Activated T-helper 2 cell treated with anti-CD3 and anti-CD28 coated beads, Interferon-gamma antibody, Interleukin-2, Interleukin-4, amounts not matched to agents 10 μg/mL and 5 μg/mL and 100 μg/mL, durations not matched to agents 14 hours and 24 hours and 36 hours (primary cell): ENCODE measurements at regions of chr2 and their contacts with region 1.

Region 1: GRCh38 chr2:234288974-234289455 is 207.9 kb downstream of the ARL4C start:
- DNase-seq: peak; percentile 67
- H3K4me3 Mint-ChIP-seq: no peak overlapping the region
- H3K27ac Mint-ChIP-seq: peak overlapping the region; percentile 99
- H3K4me1 Mint-ChIP-seq: peaks cover 79% of the 10 kb centered on the region
- H3K27me3 Mint-ChIP-seq: no peaks in the 10 kb centered on the region

Region 2: GRCh38 chr2:234135720-234136221 is 153.2 kb before region 1 on chr2:
- intact Hi-C with region 1: loop called (anchors 5 kb)
- DNase-seq: peak; percentile 33
- H3K4me3 Mint-ChIP-seq: no peak overlapping the region
- H3K27ac Mint-ChIP-seq: no peak overlapping the region
- H3K4me1 Mint-ChIP-seq: peaks cover 20% of the 10 kb centered on the region
- H3K27me3 Mint-ChIP-seq: peaks cover 14% of the 10 kb centered on the region

Region 3: DNA sequence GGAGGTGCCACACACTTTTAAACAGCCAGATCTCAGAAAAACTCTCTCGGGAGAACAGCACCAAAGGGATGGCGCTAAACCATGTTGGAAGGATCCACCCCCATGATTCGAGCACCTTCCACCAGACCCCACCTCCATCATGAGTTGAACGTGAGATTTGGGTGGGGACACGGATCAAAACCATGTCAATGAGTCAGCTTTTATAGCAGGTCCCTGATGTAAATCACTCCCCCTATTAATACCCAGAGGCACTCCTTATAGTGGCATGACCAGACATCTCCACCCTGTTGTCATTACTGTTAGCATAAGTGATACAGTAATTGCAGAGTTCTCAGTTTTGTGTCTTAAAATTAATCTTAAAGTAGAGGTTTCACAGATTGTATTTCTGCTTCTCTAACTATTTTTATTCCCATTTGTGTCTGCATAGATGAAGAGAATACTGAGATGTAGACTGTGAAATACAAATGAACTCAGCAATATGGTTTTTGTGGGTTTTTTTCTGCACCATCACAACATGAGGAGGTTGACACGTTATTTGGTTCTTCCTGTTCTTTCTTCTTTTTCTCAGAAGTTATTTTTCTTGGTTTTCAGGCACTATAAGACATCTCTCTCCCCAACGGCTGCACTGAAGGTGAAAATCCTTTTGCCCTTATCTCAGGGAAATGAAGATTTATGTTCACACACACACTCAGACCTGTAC is 10.3 kb before region 1 on chr2:
- intact Hi-C with region 1: loop called (anchors 1 kb)
- DNase-seq: peak; percentile 28
- H3K4me3 Mint-ChIP-seq: no peak overlapping the region
- H3K27ac Mint-ChIP-seq: peak overlapping the region; percentile 71
- H3K4me1 Mint-ChIP-seq: peaks cover 66% of the 10 kb centered on the region
- H3K27me3 Mint-ChIP-seq: no peaks in the 10 kb centered on the region

Region 4: DNA sequence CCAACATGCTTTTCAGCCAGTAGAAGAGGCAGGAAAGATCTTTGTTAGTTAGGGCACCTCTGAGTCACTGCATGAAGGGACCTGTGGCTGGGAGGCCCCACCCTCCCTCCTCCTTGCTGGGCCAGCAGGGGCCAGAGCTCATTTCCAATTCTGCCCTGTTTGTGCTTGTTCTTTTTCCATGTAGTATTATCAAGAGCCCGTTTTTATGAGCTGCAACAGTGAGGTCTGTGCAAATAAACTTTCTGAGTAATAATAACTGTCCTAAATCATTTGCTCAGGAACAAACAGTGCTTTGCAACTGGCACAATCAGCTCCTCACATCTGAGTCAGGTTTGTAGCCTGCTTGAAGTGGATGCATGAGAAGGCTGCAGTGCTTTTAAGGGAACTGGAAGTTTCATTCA is 79.8 kb after region 1 on chr2:
- intact Hi-C with region 1: loop called (anchors 2 kb)
- DNase-seq: peak; percentile 34
- H3K4me3 Mint-ChIP-seq: no peak overlapping the region
- H3K27ac Mint-ChIP-seq: peak overlapping the region; percentile 75
- H3K4me1 Mint-ChIP-seq: peaks cover 66% of the 10 kb centered on the region
- H3K27me3 Mint-ChIP-seq: no peaks in the 10 kb centered on the region

Region 5: GRCh38 chr2:234425619-234426603 is 136.9 kb after region 1 on chr2:
- intact Hi-C with region 1: loop called (anchors 1 kb)
- DNase-seq: peak; percentile 80
- H3K4me3 Mint-ChIP-seq: peak overlapping the region; percentile 69
- H3K27ac Mint-ChIP-seq: peak overlapping the region; percentile 95
- H3K4me1 Mint-ChIP-seq: peaks cover 77% of the 10 kb centered on the region
- H3K27me3 Mint-ChIP-seq: no peaks in the 10 kb centered on the region

Region 6: GRCh38 chr2:234451852-234452625 is 163.0 kb after region 1 on chr2:
- intact Hi-C with region 1: loop called (anchors 2 kb)
- DNase-seq: no peak
- H3K4me3 Mint-ChIP-seq: peak overlapping the region; percentile 91
- H3K27ac Mint-ChIP-seq: peak overlapping the region; percentile 92
- H3K4me1 Mint-ChIP-seq: peaks cover 83% of the 10 kb centered on the region
- H3K27me3 Mint-ChIP-seq: no peaks in the 10 kb centered on the region

Region 7: GRCh38 chr2:234494361-234495250 is 205.6 kb after region 1 on chr2:
- intact Hi-C with region 1: loop called (anchors 1 kb)
- DNase-seq: no peak
- H3K4me3 Mint-ChIP-seq: peak overlapping the region; percentile 97
- H3K27ac Mint-ChIP-seq: peak overlapping the region; percentile 96
- H3K4me1 Mint-ChIP-seq: peaks cover 52% of the 10 kb centered on the region
- H3K27me3 Mint-ChIP-seq: no peaks in the 10 kb centered on the region